CD4-positive, alpha-beta memory T cell (primary cell): ENCODE measurements at regions of chr17 and their contacts with region 1.

Region 1: DNA sequence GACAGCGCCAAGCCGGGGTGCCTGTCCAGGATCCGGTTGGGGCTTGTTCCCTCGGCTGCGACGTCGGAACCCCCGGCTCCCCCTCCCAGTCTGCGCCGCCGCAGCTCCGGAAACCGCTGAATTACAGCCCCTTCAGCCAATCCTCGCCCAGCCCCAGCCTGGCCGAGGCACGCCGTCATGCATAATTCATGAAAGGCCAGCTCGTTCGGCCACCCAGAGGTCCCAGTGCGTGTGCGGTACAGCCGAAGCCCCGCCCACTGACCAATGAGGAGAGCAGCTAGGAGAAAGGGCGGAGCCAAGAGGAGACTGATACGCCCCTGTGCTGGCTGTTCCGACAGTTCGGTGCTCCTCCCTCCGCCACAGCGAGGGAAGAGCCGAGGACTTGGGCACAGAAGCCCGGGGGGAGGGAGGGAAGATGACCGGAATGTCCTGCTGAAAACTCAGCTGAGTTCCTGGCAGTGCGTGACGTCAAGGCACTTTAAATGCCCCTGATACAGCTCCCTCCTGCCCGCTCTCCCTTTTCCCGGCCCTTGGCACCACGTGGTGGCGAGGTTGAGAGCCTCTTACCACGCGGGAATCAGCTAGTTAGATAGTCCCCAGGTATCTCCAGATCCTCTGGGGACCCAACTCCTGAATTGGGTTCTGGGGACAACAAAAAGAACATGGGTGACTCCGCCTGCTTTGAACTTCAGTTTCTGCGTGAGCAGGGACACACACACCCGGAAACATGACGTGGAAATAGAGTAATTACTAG is at the start of gene STAT3:
- DNase-seq: peak; percentile 100
- H3K4me3 ChIP-seq: peak within 1 kb of the TSS; percentile 86 to 92
- H3K4me3 Mint-ChIP-seq: peak within 1 kb of the TSS; percentile 93 to 99 (median 96)
- H3K27ac ChIP-seq: peak within 1 kb of the TSS; percentile 99
- H3K27ac Mint-ChIP-seq: peak within 1 kb of the TSS; percentile 99 to 100 (median 100)
- H3K4me1 ChIP-seq: peaks cover 42% of the 10 kb centered on the region
- H3K4me1 Mint-ChIP-seq: peaks cover 28 to 53% (median 41%) of the 10 kb centered on the region in 4 donors
- H3K27me3 ChIP-seq: no peaks in the 10 kb centered on the region
- H3K27me3 Mint-ChIP-seq: no peaks in the 10 kb centered on the region
- total RNA-seq, gene STAT3: 129 to 131 TPM

Region 2: GRCh38 chr17:42193969-42194899 is 194.3 kb before region 1 on chr17 and contains the start of gene GHDC:
- CTCF ChIA-PET with region 1: no interaction called
- POLR2A ChIA-PET with region 1: interaction called, 12 read pairs
- intact Hi-C with region 1: no loop called
- DNase-seq: peak; percentile 75 to 84 (median 76)
- H3K4me3 ChIP-seq: peak within 1 kb of the TSS; percentile 64 to 97
- H3K4me3 Mint-ChIP-seq: peak within 1 kb of the TSS; percentile 82 to 96 (median 93)
- H3K27ac ChIP-seq: peak within 1 kb of the TSS; percentile 70
- H3K27ac Mint-ChIP-seq: peak within 1 kb of the TSS; percentile 60 to 95 (median 89)
- H3K4me1 ChIP-seq: peaks cover 20% of the 10 kb centered on the region
- H3K4me1 Mint-ChIP-seq: peaks cover 15 to 25% (median 20%) of the 10 kb centered on the region in 4 donors
- H3K27me3 ChIP-seq: no peaks in the 10 kb centered on the region
- H3K27me3 Mint-ChIP-seq: no peaks in the 10 kb centered on the region
- total RNA-seq, gene GHDC: 23.9 to 25.3 TPM

Region 3: GRCh38 chr17:42287926-42288802 is 100.4 kb before region 1 on chr17 and contains the start of gene STAT5A:
- CTCF ChIA-PET with region 1: interaction called, 3 read pairs
- POLR2A ChIA-PET with region 1: interaction called, 27 read pairs
- intact Hi-C with region 1: no loop called
- DNase-seq: peak; percentile 81 to 89 (median 83)
- H3K4me3 ChIP-seq: peak within 1 kb of the TSS; percentile 86 to 88
- H3K4me3 Mint-ChIP-seq: peak within 1 kb of the TSS; percentile 90 to 97 (median 94)
- H3K27ac ChIP-seq: peak within 1 kb of the TSS; percentile 87
- H3K27ac Mint-ChIP-seq: peak within 1 kb of the TSS; percentile 92 to 99 (median 97)
- H3K4me1 ChIP-seq: peaks cover 48% of the 10 kb centered on the region
- H3K4me1 Mint-ChIP-seq: peaks cover 37 to 62% (median 47%) of the 10 kb centered on the region in 4 donors
- H3K27me3 ChIP-seq: no peaks in the 10 kb centered on the region
- H3K27me3 Mint-ChIP-seq: no peaks in the 10 kb centered on the region
- total RNA-seq, gene STAT5A: 130 to 133 TPM

Region 4: DNA sequence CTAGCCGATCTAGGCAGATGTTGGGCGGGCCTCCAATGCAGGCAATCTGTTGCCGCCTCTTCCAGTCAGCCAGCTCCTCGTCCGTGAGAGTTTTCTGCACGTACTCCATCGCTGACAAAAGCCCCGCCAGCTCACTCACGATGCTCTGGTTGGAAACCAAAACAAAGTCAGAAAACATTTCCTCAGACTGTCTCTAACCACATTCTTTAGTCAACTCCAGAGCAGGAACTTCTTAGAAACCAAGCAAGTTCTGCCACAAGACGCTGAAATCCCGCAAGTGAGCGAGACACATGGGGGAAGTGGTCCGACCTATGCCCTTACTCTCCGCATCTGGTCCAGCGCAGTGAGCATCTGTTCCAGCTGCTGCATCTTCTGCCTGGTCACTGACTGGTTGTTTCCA is 51.1 kb before region 1 on chr17:
- CTCF ChIA-PET with region 1: interaction called, 5 read pairs
- POLR2A ChIA-PET with region 1: interaction called, 40 read pairs
- intact Hi-C with region 1: loop called (anchors 1 kb)
- DNase-seq: peak; percentile 73 to 87 (median 82)
- H3K4me3 ChIP-seq: no peak overlapping the region
- H3K4me3 Mint-ChIP-seq: peak overlapping the region; percentile 59 to 89 (median 69)
- H3K27ac ChIP-seq: peak overlapping the region; percentile 63
- H3K27ac Mint-ChIP-seq: peak overlapping the region; percentile 77 to 98 (median 95)
- H3K4me1 ChIP-seq: peaks cover 54% of the 10 kb centered on the region
- H3K4me1 Mint-ChIP-seq: peaks cover 29 to 56% (median 39%) of the 10 kb centered on the region in 4 donors
- H3K27me3 ChIP-seq: no peaks in the 10 kb centered on the region
- H3K27me3 Mint-ChIP-seq: no peaks in the 10 kb centered on the region

Region 5: DNA sequence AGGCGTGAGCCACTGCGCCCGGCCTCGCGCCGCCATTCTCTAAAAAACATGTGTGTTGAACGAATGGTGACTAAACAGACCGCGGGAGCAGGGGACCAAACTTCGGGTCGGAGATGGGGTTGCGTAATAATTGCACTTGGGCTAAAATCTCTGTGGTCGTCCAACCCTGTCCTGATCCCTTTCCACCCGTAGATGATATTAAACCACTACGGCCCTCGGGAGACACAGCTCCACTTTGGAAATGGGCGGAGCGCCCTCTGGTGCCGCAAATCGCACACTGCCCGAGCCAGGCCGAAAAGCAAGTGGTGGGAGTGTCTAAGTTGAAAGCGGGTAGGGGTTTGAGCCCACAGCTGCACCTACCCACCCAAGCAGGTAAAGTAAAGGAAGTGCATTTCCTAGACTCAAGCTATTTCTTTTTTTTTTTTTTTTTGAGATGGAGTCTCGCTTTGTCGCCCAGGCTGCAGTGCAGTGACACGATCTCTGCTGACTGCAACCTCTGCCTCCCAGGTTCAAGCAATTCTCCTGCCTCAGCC is 17.5 kb after region 1 on chr17:
- CTCF ChIA-PET with region 1: interaction called, 12 read pairs
- POLR2A ChIA-PET with region 1: interaction called, 43 read pairs
- intact Hi-C with region 1: loop called (anchors 1 kb)
- DNase-seq: peak; percentile 76 to 81 (median 79)
- H3K4me3 ChIP-seq: no peak overlapping the region
- H3K4me3 Mint-ChIP-seq: no peak overlapping the region
- H3K27ac ChIP-seq: no peak overlapping the region
- H3K27ac Mint-ChIP-seq: peak overlapping the region in 6 of 7 donors; percentile 19 to 68 (median 38)
- H3K4me1 ChIP-seq: peaks cover 4% of the 10 kb centered on the region
- H3K4me1 Mint-ChIP-seq: peaks cover 8 to 17% (median 10%) of the 10 kb centered on the region in 4 donors
- H3K27me3 ChIP-seq: no peaks in the 10 kb centered on the region
- H3K27me3 Mint-ChIP-seq: no peaks in the 10 kb centered on the region

Region 6: DNA sequence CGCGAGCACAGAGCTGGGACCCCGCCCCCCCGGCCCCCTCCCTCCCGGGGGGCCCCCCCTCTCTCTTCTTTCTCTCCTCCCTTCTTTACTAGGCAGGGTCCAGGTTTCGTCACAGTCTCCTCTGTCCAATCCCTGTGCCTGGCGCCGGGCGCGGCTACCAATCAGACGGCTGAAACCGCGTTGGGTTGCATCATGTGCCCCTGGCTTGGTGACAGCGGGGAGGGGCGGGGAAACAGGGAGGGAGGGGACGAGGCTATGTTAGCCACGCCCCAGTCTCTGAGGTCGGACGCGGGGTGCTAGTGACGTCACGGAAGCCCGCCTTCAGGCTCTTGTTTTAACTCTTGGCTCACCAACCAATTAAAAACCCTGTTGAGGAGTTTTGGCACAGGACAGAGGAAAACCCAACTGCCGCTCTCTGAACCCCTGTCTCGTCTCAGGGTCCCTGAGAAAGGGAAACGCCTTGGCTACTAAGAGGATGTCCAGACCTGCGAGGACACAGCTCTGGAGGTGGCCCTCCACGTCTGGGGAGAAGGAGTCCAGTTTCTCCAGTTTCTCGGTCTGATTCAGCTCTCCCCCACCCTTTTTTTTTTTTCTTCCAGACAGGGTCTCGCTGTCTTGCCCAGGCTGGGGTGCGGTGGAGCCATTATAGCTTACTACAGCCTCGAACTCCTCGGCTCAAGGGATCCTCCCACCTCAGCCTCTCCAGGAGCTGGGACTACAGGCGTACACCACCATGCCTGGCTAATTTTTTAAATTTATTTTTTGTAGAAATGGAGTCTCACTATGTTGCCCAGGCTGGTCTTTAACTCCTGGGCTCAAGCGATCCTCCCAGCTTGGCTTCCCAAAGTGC is 288.7 kb after region 1 on chr17:
- CTCF ChIA-PET with region 1: no interaction called
- POLR2A ChIA-PET with region 1: interaction called, 8 read pairs
- intact Hi-C with region 1: loop called (anchors 1 kb)
- DNase-seq: peak; percentile 91 to 98 (median 93)
- H3K4me3 ChIP-seq: peak overlapping the region; percentile 63 to 75
- H3K4me3 Mint-ChIP-seq: peak overlapping the region; percentile 86 to 97 (median 90)
- H3K27ac ChIP-seq: peak overlapping the region; percentile 42
- H3K27ac Mint-ChIP-seq: peak overlapping the region; percentile 79 to 94 (median 89)
- H3K4me1 ChIP-seq: peaks cover 74% of the 10 kb centered on the region
- H3K4me1 Mint-ChIP-seq: peaks cover 32 to 70% (median 46%) of the 10 kb centered on the region in 4 donors
- H3K27me3 ChIP-seq: peaks cover 36% of the 10 kb centered on the region
- H3K27me3 Mint-ChIP-seq: peaks cover 23 to 27% of the 10 kb centered on the region in 2 donors